ENCODE measurements at regions of chr7 and their contacts with region 1.

Region 1: GRCh38 chr7:24757353-24758275 is at the start of gene GSDME:
- DNase-seq: peak; percentile 77
- H3K4me3 ChIP-seq: peak within 1 kb of the TSS; percentile 59 to 79 (median 77)
- H3K27ac ChIP-seq: peak within 1 kb of the TSS; percentile 82 to 89 (median 84)
- H3K4me1 ChIP-seq: peaks cover 0 to 15% (median 10%) of the 10 kb centered on the region in 4 donors
- H3K27me3 ChIP-seq: no peaks in the 10 kb centered on the region
- CTCF ChIP-seq: no peak
- EP300 ChIP-seq: no peak
- POLR2A ChIP-seq: no peak
- total RNA-seq, gene GSDME: 7.1 to 11.9 (median 11.0) TPM

Region 2: GRCh38 chr7:24313777-24314176 is 443.8 kb before region 1 on chr7:
- intact Hi-C with region 1: no loop called
- DNase-seq: no peak
- H3K4me3 ChIP-seq: no peak overlapping the region
- H3K27ac ChIP-seq: no peak overlapping the region
- H3K4me1 ChIP-seq: no peaks in the 10 kb centered on the region
- H3K27me3 ChIP-seq: no peaks in the 10 kb centered on the region
- CTCF ChIP-seq: no peak
- EP300 ChIP-seq: no peak
- POLR2A ChIP-seq: no peak

Region 3: GRCh38 chr7:24572997-24573625 is 184.5 kb before region 1 on chr7 and contains the start of gene PALS2:
- intact Hi-C with region 1: loop called (anchors 5 kb)
- DNase-seq: peak; percentile 80
- H3K4me3 ChIP-seq: peak within 1 kb of the TSS; percentile 71 to 85 (median 79)
- H3K27ac ChIP-seq: peak within 1 kb of the TSS; percentile 77 to 87 (median 82)
- H3K4me1 ChIP-seq: peaks cover 0 to 14% (median 9%) of the 10 kb centered on the region in 4 donors
- H3K27me3 ChIP-seq: no peaks in the 10 kb centered on the region
- CTCF ChIP-seq: no peak
- EP300 ChIP-seq: no peak
- POLR2A ChIP-seq: no peak
- total RNA-seq, gene PALS2: 6.9 to 14.2 (median 7.7) TPM

Measured in sigmoid colon (tissue), 7 donors.